Activated CD8-positive, alpha-beta T cell treated with anti-CD3 and anti-CD28 coated beads for 36 hours (primary cell): ENCODE measurements at regions of chr11 and their contacts with region 1.

Region 1: GRCh38 chr11:122754553-122755322 is 83.6 kb upstream of the CRTAM start:
- DNase-seq: peak; percentile 63
- ATAC-seq: peak; percentile 40
- H3K4me3 Mint-ChIP-seq: no peak overlapping the region
- H3K27ac Mint-ChIP-seq: no peak overlapping the region
- H3K4me1 Mint-ChIP-seq: peaks cover 70% of the 10 kb centered on the region
- H3K27me3 Mint-ChIP-seq: no peaks in the 10 kb centered on the region
- CTCF ChIP-seq: peak; percentile 60

Region 2: GRCh38 chr11:122628810-122629555 is 125.8 kb before region 1 on chr11:
- CTCF ChIA-PET with region 1: interaction called, 149 read pairs
- POLR2A ChIA-PET with region 1: no interaction called
- intact Hi-C with region 1: loop called (anchors 2 kb)
- DNase-seq: peak; percentile 83
- ATAC-seq: peak; percentile 96
- H3K4me3 Mint-ChIP-seq: no peak overlapping the region
- H3K27ac Mint-ChIP-seq: no peak overlapping the region
- H3K4me1 Mint-ChIP-seq: peaks cover 14% of the 10 kb centered on the region
- H3K27me3 Mint-ChIP-seq: no peaks in the 10 kb centered on the region
- CTCF ChIP-seq: peak; percentile 86

Region 3: GRCh38 chr11:122668562-122669090 is 86.1 kb before region 1 on chr11:
- CTCF ChIA-PET with region 1: interaction called, 71 read pairs
- POLR2A ChIA-PET with region 1: no interaction called
- intact Hi-C with region 1: loop called (anchors 5 kb)
- DNase-seq: peak; percentile 33
- ATAC-seq: peak; percentile 79
- H3K4me3 Mint-ChIP-seq: peak overlapping the region; percentile 33
- H3K27ac Mint-ChIP-seq: peak overlapping the region; percentile 89
- H3K4me1 Mint-ChIP-seq: peaks cover 65% of the 10 kb centered on the region
- H3K27me3 Mint-ChIP-seq: no peaks in the 10 kb centered on the region
- CTCF ChIP-seq: no peak

Region 4: DNA sequence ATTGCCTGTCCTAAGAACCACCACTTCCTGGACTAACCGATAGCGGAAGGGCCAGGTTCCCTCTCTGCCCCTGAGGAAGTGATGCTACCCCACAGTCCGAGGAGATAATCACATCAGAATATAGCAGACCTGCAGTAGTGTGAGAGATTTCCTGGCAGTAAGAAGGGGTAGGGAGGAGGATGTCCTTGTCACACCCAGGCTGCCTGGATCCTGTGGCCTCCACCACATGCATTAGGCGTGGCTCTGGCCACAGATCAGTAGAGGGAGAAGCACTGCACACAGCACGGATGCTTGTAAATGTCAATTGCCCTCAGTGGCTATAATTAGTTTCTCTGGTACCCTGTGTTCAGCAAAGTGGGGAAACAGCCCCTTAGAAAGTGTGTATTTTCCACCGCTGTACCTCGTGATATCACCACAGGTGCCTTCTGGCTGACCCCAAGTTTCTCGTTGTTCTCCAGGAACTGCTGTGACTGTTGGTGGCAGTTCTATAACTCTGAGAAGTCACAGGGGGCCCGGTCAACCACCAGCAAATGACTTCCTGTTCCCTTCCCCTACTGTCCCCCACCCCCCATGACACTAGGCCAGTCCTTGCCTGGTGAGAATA is 37.4 kb before region 1 on chr11:
- CTCF ChIA-PET with region 1: interaction called, 6 read pairs
- POLR2A ChIA-PET with region 1: interaction called, 4 read pairs
- intact Hi-C with region 1: loop called (anchors 5 kb)
- DNase-seq: peak; percentile 93
- ATAC-seq: peak; percentile 83
- H3K4me3 Mint-ChIP-seq: peak overlapping the region; percentile 45
- H3K27ac Mint-ChIP-seq: peak overlapping the region; percentile 90
- H3K4me1 Mint-ChIP-seq: peaks cover 87% of the 10 kb centered on the region
- H3K27me3 Mint-ChIP-seq: no peaks in the 10 kb centered on the region
- CTCF ChIP-seq: no peak

Region 5: GRCh38 chr11:122743949-122744348 is 10.8 kb before region 1 on chr11:
- CTCF ChIA-PET with region 1: interaction called, 49 read pairs
- POLR2A ChIA-PET with region 1: interaction called, 7 read pairs
- intact Hi-C with region 1: no loop called
- DNase-seq: peak; percentile 95
- ATAC-seq: peak; percentile 72
- H3K4me3 Mint-ChIP-seq: no peak overlapping the region
- H3K27ac Mint-ChIP-seq: no peak overlapping the region
- H3K4me1 Mint-ChIP-seq: no peaks in the 10 kb centered on the region
- H3K27me3 Mint-ChIP-seq: no peaks in the 10 kb centered on the region
- CTCF ChIP-seq: no peak

Region 6: DNA sequence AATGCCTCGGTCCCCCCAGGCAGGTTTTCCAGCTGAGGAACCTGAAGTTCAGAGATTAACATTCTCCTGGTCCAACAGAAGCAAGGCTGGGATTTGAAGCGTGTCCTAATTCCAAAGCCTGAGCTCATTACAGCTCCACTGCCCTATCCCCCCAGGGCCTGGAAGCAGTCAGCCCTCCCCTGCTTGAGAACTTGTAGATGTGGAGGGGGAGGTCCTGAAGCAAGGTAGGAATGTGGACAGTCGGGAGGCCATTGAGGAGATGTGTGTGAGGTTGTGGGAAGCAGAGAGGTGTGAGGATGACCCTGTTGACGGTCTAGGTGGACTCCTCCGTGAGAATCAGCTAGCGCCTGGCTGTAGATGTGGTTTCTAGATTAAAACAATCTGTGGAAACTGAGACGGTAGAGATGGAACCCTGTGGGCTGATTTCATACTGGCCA is 683.5 kb after region 1 on chr11:
- CTCF ChIA-PET with region 1: no interaction called
- POLR2A ChIA-PET with region 1: no interaction called
- intact Hi-C with region 1: no loop called
- DNase-seq: no peak
- ATAC-seq: peak; percentile 9
- H3K4me3 Mint-ChIP-seq: no peak overlapping the region
- H3K27ac Mint-ChIP-seq: peak overlapping the region; percentile 77
- H3K4me1 Mint-ChIP-seq: peaks cover 44% of the 10 kb centered on the region
- H3K27me3 Mint-ChIP-seq: no peaks in the 10 kb centered on the region
- CTCF ChIP-seq: no peak